CD4-positive, alpha-beta memory T cell (primary cell): ENCODE measurements at regions of chr11 and their contacts with region 1.

Region 1: DNA sequence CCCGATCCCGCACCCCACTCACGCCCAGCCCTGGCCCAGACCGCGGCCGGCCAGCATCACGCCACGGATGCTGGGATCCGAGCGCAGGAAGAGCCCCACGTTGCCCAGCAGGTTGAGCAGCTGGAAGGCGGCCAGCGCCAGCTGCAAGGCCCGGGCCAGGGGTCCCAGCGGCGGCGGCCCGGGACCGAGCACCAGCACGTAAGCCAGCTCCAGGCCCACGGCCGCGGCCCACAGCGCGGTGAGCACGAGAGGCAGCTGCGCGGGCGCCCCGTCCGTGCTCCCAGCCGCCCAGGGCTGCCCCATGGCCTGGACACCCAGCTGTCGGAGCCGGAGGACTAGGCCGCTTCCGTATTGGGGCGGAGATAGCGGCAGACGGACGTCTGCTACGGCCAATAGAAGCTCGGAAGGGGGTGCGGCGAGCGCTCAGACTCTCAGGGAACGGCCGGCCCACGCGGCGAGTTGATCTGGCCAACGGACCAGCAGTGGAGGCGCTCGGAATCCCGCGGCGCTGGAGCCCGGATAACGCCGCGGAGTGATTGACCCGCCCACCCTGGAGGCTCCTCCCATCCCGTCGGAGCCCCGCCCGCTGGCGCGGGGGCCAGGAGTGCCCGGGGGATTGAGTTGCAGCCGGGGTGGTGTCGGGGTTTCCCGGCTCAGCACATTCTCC is at the start of gene ZDHHC24:
- DNase-seq: peak; percentile 79 to 86 (median 82)
- H3K4me3 ChIP-seq: peak within 1 kb of the TSS; percentile 82 to 84
- H3K4me3 Mint-ChIP-seq: peak within 1 kb of the TSS; percentile 85 to 96 (median 92)
- H3K27ac ChIP-seq: peak within 1 kb of the TSS; percentile 82
- H3K27ac Mint-ChIP-seq: peak within 1 kb of the TSS; percentile 67 to 98 (median 92)
- H3K4me1 ChIP-seq: peaks cover 35% of the 10 kb centered on the region
- H3K4me1 Mint-ChIP-seq: peaks cover 22 to 59% (median 34%) of the 10 kb centered on the region in 4 donors
- H3K27me3 ChIP-seq: no peaks in the 10 kb centered on the region
- H3K27me3 Mint-ChIP-seq: no peaks in the 10 kb centered on the region
- total RNA-seq, gene ZDHHC24: 24.5 to 27.2 TPM

Region 2: DNA sequence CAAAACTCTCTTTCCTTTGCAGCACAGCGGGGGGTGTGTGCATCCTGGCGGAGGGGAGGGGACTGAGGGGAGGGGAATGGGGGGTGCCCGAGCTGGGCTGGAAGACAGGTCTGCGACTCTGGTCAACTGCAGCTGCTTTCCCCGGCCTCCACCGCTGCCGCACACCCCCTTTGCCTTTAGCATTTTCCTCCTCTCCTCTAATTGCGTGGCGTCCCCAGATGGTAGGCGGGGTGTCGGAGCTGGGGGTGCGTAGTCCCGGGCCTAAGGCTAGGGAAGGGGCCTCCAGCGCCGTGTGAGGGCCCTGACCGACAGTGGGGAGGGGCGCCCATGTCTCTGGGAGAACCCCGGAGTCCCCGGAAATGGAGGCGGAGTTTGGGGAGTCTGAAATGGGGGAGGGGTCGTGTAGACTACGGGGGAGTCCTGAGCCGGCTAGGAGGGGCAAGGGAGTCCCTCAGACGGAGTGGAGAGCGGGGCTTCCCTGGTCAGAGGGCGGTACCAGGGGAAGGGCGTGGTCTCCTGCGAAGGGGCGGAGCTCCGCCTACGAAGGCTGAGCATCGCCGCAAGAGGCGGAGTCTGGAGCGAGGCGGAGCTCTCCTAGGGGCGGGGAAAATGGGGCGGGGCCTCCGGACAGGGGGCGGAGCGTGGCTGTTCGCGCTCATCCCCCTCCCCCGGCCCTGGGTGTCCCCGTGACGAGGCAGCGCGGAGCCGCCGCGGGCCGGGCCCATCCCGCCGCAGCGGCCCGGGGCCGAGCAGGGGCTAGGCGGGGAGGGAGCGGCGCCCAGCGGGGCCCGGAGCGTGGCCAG is 79.4 kb before region 1 on chr11 and contains the start of gene PELI3:
- CTCF ChIA-PET with region 1: no interaction called
- POLR2A ChIA-PET with region 1: interaction called, 14 read pairs
- intact Hi-C with region 1: no loop called
- DNase-seq: peak; percentile 91 to 95 (median 92)
- H3K4me3 ChIP-seq: peak within 1 kb of the TSS; percentile 58 to 65
- H3K4me3 Mint-ChIP-seq: peak within 1 kb of the TSS; percentile 89 to 94 (median 90)
- H3K27ac ChIP-seq: peak within 1 kb of the TSS; percentile 81
- H3K27ac Mint-ChIP-seq: peak within 1 kb of the TSS; percentile 91 to 97 (median 95)
- H3K4me1 ChIP-seq: peaks cover 20% of the 10 kb centered on the region
- H3K4me1 Mint-ChIP-seq: peaks cover 13 to 33% (median 21%) of the 10 kb centered on the region in 4 donors
- H3K27me3 ChIP-seq: no peaks in the 10 kb centered on the region
- H3K27me3 Mint-ChIP-seq: no peaks in the 10 kb centered on the region
- total RNA-seq, gene PELI3: 25.3 to 25.9 TPM

Region 3: GRCh38 chr11:66510271-66510989 is 35.4 kb before region 1 on chr11 and contains the start of gene BBS1:
- CTCF ChIA-PET with region 1: no interaction called
- POLR2A ChIA-PET with region 1: interaction called, 12 read pairs
- intact Hi-C with region 1: no loop called
- DNase-seq: peak; percentile 75 to 79 (median 78)
- H3K4me3 ChIP-seq: peak within 1 kb of the TSS; percentile 90 to 94
- H3K4me3 Mint-ChIP-seq: peak within 1 kb of the TSS; percentile 86 to 91 (median 90)
- H3K27ac ChIP-seq: peak within 1 kb of the TSS; percentile 58
- H3K27ac Mint-ChIP-seq: peak within 1 kb of the TSS; percentile 56 to 91 (median 81)
- H3K4me1 ChIP-seq: peaks cover 18% of the 10 kb centered on the region
- H3K4me1 Mint-ChIP-seq: peaks cover 8 to 19% (median 17%) of the 10 kb centered on the region in 4 donors
- H3K27me3 ChIP-seq: no peaks in the 10 kb centered on the region
- H3K27me3 Mint-ChIP-seq: no peaks in the 10 kb centered on the region
- total RNA-seq, gene BBS1: 37.3 to 41.3 TPM

Region 4: DNA sequence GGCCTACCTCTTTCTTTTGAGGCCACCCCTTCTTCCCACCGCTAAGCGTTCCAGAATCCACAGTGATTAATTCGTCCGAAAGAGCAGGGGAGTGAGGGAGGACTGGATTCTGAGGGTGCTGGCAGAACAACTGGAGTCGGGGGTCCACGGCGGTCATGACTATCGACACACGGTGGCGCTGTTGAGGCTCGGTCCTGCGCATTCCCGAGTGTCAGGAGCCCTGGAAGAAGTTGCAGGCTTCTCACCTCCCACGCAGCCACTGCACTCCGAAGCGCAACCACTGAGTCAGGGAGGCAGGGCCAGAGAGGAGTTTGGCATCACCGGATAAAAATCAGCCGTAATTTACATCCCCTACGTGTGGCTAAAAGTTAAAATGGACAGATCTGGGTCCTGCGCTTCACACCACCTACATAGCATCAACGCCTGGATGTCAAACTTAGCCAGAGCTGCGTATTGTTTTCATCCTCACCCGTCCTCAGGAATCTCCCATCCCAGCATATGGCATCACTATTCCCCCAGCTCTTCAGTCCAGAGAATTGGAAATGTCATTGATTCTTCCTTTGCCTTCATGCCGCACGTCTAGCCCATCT is 33.3 kb after region 1 on chr11:
- CTCF ChIA-PET with region 1: interaction called, 11 read pairs
- POLR2A ChIA-PET with region 1: interaction called, 6 read pairs
- intact Hi-C with region 1: no loop called
- DNase-seq: peak; percentile 64 to 72 (median 68)
- H3K4me3 ChIP-seq: no peak overlapping the region
- H3K4me3 Mint-ChIP-seq: peak overlapping the region in 2 of 8 donors; percentile 33 to 47
- H3K27ac ChIP-seq: no peak overlapping the region
- H3K27ac Mint-ChIP-seq: peak overlapping the region in 3 of 7 donors; percentile 9 to 68 (median 25)
- H3K4me1 ChIP-seq: peaks cover 5% of the 10 kb centered on the region
- H3K4me1 Mint-ChIP-seq: peaks cover 0 to 12% (median 6%) of the 10 kb centered on the region in 4 donors
- H3K27me3 ChIP-seq: no peaks in the 10 kb centered on the region
- H3K27me3 Mint-ChIP-seq: peaks cover 0 to 7% of the 10 kb centered on the region in 2 donors

Region 5: GRCh38 chr11:66638177-66639065 is 92.6 kb after region 1 on chr11 and contains the start of gene RBM4:
- CTCF ChIA-PET with region 1: interaction called, 5 read pairs
- POLR2A ChIA-PET with region 1: interaction called, 23 read pairs
- intact Hi-C with region 1: no loop called
- DNase-seq: peak; percentile 95 to 99 (median 98)
- H3K4me3 ChIP-seq: peak within 1 kb of the TSS; percentile 63 to 96
- H3K4me3 Mint-ChIP-seq: peak within 1 kb of the TSS; percentile 97 to 99 (median 98)
- H3K27ac ChIP-seq: peak within 1 kb of the TSS; percentile 88
- H3K27ac Mint-ChIP-seq: peak within 1 kb of the TSS; percentile 94 to 99 (median 99)
- H3K4me1 ChIP-seq: peaks cover 49% of the 10 kb centered on the region
- H3K4me1 Mint-ChIP-seq: peaks cover 48 to 81% (median 59%) of the 10 kb centered on the region in 4 donors
- H3K27me3 ChIP-seq: no peaks in the 10 kb centered on the region
- H3K27me3 Mint-ChIP-seq: no peaks in the 10 kb centered on the region
- total RNA-seq, gene RBM4: 183 to 189 TPM